ENCODE measurements at regions of chr1 and their contacts with region 1.

Region 1: DNA sequence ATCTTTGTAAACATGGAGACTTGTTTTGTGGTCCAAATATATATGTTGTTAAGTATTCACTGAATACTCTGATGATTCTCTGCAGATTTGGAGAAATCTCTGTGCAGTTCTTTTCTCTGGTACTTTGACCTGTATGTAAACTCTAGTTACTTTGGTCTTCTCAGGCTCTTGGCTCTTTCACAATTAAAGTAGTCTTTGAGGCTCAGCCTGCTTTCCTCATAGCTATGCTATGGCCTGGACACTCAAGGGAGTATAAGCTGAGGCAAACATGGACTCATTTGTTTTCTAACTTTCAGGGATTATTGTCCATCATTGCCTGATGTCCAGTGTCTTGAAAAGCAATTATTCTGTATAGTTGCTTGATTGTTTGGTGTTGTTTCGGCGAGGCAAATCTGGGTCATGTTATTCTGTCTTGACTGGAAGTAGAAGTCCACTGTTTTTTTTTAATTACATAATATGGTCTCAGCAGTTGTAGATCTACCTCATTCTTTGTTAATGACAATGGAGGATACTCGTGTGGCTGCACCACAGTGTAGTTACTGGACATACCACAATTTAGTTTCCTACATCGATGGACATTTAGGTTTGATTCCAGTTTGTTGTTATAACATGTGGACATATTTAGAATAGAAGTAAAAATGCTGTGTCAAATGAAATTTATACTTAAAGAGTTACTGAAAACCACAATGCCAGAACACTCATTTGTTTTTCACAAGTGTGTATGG is 9.2 kb downstream of the PTBP2 start:
- DNase-seq: no peak
- ATAC-seq: no peak
- H3K4me3 ChIP-seq: no peak overlapping the region
- H3K4me3 Mint-ChIP-seq: no peak overlapping the region
- H3K27ac ChIP-seq: no peak overlapping the region
- H3K27ac Mint-ChIP-seq: no peak overlapping the region
- H3K4me1 ChIP-seq: peaks cover 12% of the 10 kb centered on the region
- H3K4me1 Mint-ChIP-seq: peaks cover 58% of the 10 kb centered on the region
- H3K27me3 ChIP-seq: no peaks in the 10 kb centered on the region
- H3K27me3 Mint-ChIP-seq: no peaks in the 10 kb centered on the region
- CTCF ChIP-seq: no peak

Region 2: GRCh38 chr1:96674911-96675310 is 55.8 kb before region 1 on chr1:
- CTCF ChIA-PET with region 1: no interaction called
- POLR2A ChIA-PET with region 1: no interaction called
- intact Hi-C with region 1: no loop called
- DNase-seq: no peak
- ATAC-seq: no peak
- H3K4me3 ChIP-seq: no peak overlapping the region
- H3K4me3 Mint-ChIP-seq: no peak overlapping the region
- H3K27ac ChIP-seq: no peak overlapping the region
- H3K27ac Mint-ChIP-seq: no peak overlapping the region
- H3K4me1 ChIP-seq: no peaks in the 10 kb centered on the region
- H3K4me1 Mint-ChIP-seq: no peaks in the 10 kb centered on the region
- H3K27me3 ChIP-seq: no peaks in the 10 kb centered on the region
- H3K27me3 Mint-ChIP-seq: peaks cover 2% of the 10 kb centered on the region
- CTCF ChIP-seq: no peak

Region 3: GRCh38 chr1:96698342-96698983 is 32.3 kb before region 1 on chr1:
- CTCF ChIA-PET with region 1: no interaction called
- POLR2A ChIA-PET with region 1: no interaction called
- intact Hi-C with region 1: no loop called
- DNase-seq: no peak
- ATAC-seq: no peak
- H3K4me3 ChIP-seq: no peak overlapping the region
- H3K4me3 Mint-ChIP-seq: no peak overlapping the region
- H3K27ac ChIP-seq: no peak overlapping the region
- H3K27ac Mint-ChIP-seq: no peak overlapping the region
- H3K4me1 ChIP-seq: no peaks in the 10 kb centered on the region
- H3K4me1 Mint-ChIP-seq: no peaks in the 10 kb centered on the region
- H3K27me3 ChIP-seq: no peaks in the 10 kb centered on the region
- H3K27me3 Mint-ChIP-seq: peaks cover 11% of the 10 kb centered on the region
- CTCF ChIP-seq: no peak

Region 4: DNA sequence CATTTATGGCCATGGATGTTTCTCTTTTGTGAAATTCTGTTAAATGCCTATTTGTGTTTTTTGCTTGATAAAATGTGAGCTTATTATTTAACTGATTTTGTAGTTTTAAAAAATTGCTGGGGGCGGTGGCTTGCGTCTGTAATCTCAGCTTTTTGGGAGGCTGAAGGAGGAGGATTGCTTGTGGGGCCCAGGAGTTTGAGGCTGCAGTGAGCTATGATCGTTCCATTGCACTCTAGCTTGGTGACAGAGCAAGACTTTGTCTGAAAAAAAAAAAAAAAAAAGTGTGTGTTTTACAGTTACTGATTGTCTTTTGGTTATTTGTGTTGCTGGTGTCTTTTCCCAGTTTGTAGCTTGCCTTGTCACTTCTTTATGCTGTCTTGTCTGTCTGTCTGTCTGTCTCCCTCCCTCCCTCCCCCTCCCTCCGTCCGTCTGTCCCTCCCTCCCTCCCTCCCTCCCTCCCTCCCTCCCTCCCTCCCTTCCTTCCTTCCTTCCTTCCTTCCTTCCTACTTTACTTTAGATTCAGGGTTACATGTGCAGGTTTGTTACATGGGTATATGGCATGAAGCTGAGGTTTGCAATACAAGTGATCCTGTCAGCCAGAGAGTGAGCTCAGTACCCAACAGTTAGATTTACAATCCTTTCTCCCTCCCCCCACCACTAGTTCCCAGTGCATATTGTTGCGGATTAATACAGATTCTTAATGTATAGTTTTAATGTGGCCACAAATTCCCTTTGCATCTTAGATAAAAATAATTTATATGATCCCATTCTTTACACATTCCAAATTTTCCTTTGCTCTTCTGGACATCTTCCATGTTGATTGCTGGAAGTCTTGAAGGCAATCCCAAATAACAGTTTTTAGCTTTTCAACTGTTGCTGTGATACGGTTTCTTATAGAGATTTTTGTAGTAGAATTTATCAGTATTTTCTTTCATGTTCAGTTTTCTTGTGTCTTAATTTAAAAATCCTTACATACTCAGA is 16.0 kb after region 1 on chr1:
- CTCF ChIA-PET with region 1: no interaction called
- POLR2A ChIA-PET with region 1: no interaction called
- intact Hi-C with region 1: loop called in 1 of 2 experiments (anchors 2 kb)
- DNase-seq: no peak
- ATAC-seq: no peak
- H3K4me3 ChIP-seq: no peak overlapping the region
- H3K4me3 Mint-ChIP-seq: no peak overlapping the region
- H3K27ac ChIP-seq: no peak overlapping the region
- H3K27ac Mint-ChIP-seq: no peak overlapping the region
- H3K4me1 ChIP-seq: peaks cover 6% of the 10 kb centered on the region
- H3K4me1 Mint-ChIP-seq: peaks cover 56% of the 10 kb centered on the region
- H3K27me3 ChIP-seq: no peaks in the 10 kb centered on the region
- H3K27me3 Mint-ChIP-seq: no peaks in the 10 kb centered on the region
- CTCF ChIP-seq: no peak